ENCODE measurements at regions of chr15 and their contacts with region 1.

Region 1: GRCh38 chr15:76139368-76140073 is 79.7 kb downstream of the TMEM266 start:
- DNase-seq: peak; percentile 39
- H3K4me3 ChIP-seq: no peak overlapping the region
- H3K27ac ChIP-seq: no peak overlapping the region
- H3K27me3 ChIP-seq: peaks cover 37% of the 10 kb centered on the region
- CTCF ChIP-seq: peak; percentile 95

Region 2: DNA sequence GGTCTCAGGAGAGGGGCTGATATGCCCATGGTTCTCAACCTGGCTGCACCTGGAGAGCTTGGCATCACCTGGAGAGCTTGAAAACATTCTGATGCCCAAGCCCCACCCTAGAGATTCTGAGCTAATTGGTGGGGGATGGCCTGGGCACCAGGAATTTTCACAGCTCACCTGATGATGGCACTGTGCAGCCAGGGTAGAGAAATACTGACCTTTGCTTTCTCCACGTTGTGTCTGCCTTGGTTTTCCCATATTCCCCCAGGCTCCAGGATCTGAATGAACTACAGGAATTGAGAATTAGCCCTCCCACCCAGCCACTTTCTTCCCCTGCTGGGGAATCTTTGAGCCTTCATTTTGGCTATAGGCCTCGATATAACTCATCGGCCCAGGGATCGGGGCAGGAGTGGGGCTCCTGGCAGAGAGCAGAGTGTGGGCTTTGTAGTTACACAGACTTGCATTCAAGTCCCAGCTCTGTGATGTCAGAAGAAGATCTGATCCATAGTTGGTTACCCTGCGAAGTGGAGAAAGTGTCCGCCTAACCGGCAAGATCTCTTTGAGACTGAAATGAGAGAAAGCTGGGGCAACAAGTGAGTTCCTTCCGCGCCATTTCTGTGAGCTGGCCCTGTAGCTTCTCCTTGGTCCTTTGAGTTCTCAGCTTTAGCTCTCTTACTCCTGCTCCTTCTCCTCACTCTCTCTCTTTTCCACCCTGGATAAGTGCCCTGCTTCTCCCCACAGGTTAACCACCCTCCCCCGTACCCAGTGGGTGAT is 329.4 kb before region 1 on chr15:
- CTCF ChIA-PET with region 1: interaction called, 21 read pairs
- POLR2A ChIA-PET with region 1: no interaction called
- DNase-seq: no peak
- H3K4me3 ChIP-seq: no peak overlapping the region
- H3K27ac ChIP-seq: no peak overlapping the region
- H3K27me3 ChIP-seq: peaks cover 19% of the 10 kb centered on the region
- CTCF ChIP-seq: peak; percentile 44

Region 3: GRCh38 chr15:75928680-75929608 is 210.6 kb before region 1 on chr15:
- CTCF ChIA-PET with region 1: interaction called, 24 read pairs
- POLR2A ChIA-PET with region 1: no interaction called
- DNase-seq: no peak
- H3K4me3 ChIP-seq: no peak overlapping the region
- H3K27ac ChIP-seq: no peak overlapping the region
- H3K27me3 ChIP-seq: no peaks in the 10 kb centered on the region
- CTCF ChIP-seq: peak; percentile 43

Region 4: DNA sequence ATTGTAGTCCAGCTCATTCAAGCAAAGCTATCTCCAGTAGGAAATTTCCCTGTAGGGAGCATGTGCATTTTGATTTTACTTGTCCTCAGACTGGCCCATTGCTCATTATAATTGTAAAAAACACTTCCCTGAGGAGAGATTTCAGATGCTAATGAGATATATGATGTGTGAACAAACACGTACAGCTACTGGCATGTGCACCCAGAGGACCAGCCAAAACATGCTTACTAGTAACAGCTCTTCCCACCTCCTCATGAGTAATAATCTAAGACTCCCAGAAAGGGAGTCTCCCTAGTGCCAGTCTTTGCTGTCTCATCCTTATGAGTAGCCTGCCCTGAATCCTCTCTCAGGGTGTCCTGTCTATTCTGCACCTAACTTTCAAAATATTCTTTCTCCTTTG is 192.4 kb before region 1 on chr15:
- CTCF ChIA-PET with region 1: no interaction called
- POLR2A ChIA-PET with region 1: no interaction called
- DNase-seq: peak; percentile 26
- H3K4me3 ChIP-seq: no peak overlapping the region
- H3K27ac ChIP-seq: no peak overlapping the region
- H3K27me3 ChIP-seq: no peaks in the 10 kb centered on the region
- CTCF ChIP-seq: no peak

Region 5: GRCh38 chr15:76057332-76058000 is 82.1 kb before region 1 on chr15:
- CTCF ChIA-PET with region 1: interaction called, 167 read pairs
- POLR2A ChIA-PET with region 1: no interaction called
- DNase-seq: no peak
- H3K4me3 ChIP-seq: no peak overlapping the region
- H3K27ac ChIP-seq: no peak overlapping the region
- H3K27me3 ChIP-seq: peaks cover 42% of the 10 kb centered on the region
- CTCF ChIP-seq: peak; percentile 77

Region 6: DNA sequence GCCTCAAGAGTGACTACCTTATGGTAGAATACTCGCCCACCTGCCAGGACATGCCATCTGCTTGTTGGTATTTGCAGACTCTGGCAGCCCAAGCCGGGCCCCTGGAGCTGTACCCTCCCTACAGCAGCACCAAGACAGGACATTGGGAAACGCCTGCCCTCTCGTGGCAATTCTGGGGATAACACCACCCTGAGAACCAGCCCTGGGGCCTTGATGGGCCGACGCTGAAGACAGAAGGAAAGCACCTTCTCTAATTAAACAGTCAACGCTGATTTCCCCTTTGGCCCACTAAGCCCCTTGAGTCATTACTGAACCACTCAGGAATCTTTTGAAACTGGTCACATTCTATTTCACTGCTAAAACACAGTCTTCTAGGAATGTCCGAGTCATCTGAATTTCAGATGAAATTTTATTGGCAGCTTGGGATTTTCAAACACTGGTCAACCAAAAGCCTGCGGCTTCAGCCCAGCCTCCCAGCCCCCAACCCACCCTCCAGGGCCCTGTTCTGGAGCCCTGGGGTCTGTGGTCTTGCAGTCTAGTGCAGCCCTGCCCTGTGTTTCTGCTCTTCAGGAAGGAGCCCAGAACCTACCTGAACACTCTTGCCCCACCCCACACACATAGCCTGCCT is 11.6 kb after region 1 on chr15:
- CTCF ChIA-PET with region 1: interaction called, 49 read pairs
- POLR2A ChIA-PET with region 1: interaction called, 6 read pairs
- DNase-seq: peak; percentile 68
- H3K4me3 ChIP-seq: no peak overlapping the region
- H3K27ac ChIP-seq: peak overlapping the region; percentile 57
- H3K27me3 ChIP-seq: peaks cover 8% of the 10 kb centered on the region
- CTCF ChIP-seq: peak; percentile 89

Region 7: GRCh38 chr15:76345880-76346668 is 206.6 kb after region 1 on chr15:
- CTCF ChIA-PET with region 1: no interaction called
- POLR2A ChIA-PET with region 1: interaction called, 10 read pairs
- DNase-seq: no peak
- H3K4me3 ChIP-seq: peak overlapping the region; percentile 49
- H3K27ac ChIP-seq: no peak overlapping the region
- H3K27me3 ChIP-seq: peaks cover 41% of the 10 kb centered on the region
- CTCF ChIP-seq: no peak

Measured in AG04450 (cell line).